Adrenal gland (tissue), 19 donors: ENCODE measurements at regions of chr7 and their contacts with region 1.

Region 1: GRCh38 chr7:106659963-106660861 is 746 bp downstream of the CCDC71L start:
- DNase-seq: peak; percentile 71 to 87 (median 76)
- H3K4me3 ChIP-seq: peak overlapping the region; percentile 36 to 97 (median 68)
- H3K27ac ChIP-seq: peak overlapping the region in 4 of 5 donors; percentile 91 to 97 (median 96)
- H3K4me1 ChIP-seq: peaks cover 0 to 20% of the 10 kb centered on the region in 2 donors
- H3K27me3 ChIP-seq: no peaks in the 10 kb centered on the region
- CTCF ChIP-seq: peak; percentile 46 to 75 (median 65)
- POLR2A ChIP-seq: peak in 1 of 2 donors; percentile 13

Region 2: GRCh38 chr7:106112117-106112971 is 547.9 kb before region 1 on chr7 and contains the start of gene SYPL1:
- intact Hi-C with region 1: no loop called
- DNase-seq: peak; percentile 94 to 96 (median 96)
- H3K4me3 ChIP-seq: peak within 1 kb of the TSS; percentile 42 to 92 (median 80)
- H3K27ac ChIP-seq: peak within 1 kb of the TSS; percentile 88 to 100 (median 98)
- H3K4me1 ChIP-seq: peaks cover 26 to 37% of the 10 kb centered on the region in 2 donors
- H3K27me3 ChIP-seq: no peaks in the 10 kb centered on the region
- CTCF ChIP-seq: peak in 1 of 6 experiments; percentile 14
- POLR2A ChIP-seq: peak; percentile 32 to 89
- total RNA-seq, gene SYPL1: 48.7 to 107 (median 89.6) TPM

Region 3: DNA sequence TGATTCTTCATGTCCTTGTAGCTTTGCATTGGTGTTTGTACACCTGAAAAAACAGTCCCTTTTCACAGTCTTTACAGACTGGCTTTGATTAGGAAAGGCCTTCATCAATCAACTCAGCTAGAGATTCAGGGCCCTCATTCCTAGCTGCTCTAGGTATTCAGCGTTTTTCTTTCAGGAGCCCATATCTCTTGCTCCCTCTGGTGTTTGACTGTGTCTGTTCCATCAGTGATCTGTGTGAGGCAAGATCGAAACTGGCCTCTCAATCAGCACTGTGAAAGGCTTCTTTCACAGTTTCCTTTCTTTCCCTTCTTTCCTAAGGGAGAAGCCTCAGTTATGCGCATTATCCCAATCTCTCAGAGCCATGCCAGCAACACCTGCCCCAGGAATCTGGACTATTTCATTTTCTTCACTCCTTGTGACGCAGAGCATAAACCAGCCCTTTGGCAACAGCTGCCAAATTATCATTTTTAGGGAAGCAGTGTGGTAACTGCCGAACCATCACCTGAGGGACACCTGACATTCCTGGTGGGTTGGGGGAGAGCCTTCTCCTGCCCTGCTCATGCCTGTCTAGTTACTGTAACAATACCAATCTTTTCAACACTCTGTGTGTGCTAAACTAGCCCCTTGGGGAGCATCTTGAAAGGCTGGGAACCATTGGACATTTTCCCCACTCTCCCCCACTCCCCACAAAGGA is 76.4 kb after region 1 on chr7:
- intact Hi-C with region 1: loop called (anchors 10 kb)
- DNase-seq: peak in 5 of 7 donors; percentile 21 to 56 (median 50)
- H3K4me3 ChIP-seq: no peak overlapping the region
- H3K27ac ChIP-seq: no peak overlapping the region
- H3K4me1 ChIP-seq: peaks cover 0 to 3% of the 10 kb centered on the region in 2 donors
- H3K27me3 ChIP-seq: no peaks in the 10 kb centered on the region
- CTCF ChIP-seq: peak; percentile 39 to 68 (median 58)
- POLR2A ChIP-seq: no peak